AG04449 (cell line): ENCODE measurements at regions of chr6 and their contacts with region 1.

Region 1: DNA sequence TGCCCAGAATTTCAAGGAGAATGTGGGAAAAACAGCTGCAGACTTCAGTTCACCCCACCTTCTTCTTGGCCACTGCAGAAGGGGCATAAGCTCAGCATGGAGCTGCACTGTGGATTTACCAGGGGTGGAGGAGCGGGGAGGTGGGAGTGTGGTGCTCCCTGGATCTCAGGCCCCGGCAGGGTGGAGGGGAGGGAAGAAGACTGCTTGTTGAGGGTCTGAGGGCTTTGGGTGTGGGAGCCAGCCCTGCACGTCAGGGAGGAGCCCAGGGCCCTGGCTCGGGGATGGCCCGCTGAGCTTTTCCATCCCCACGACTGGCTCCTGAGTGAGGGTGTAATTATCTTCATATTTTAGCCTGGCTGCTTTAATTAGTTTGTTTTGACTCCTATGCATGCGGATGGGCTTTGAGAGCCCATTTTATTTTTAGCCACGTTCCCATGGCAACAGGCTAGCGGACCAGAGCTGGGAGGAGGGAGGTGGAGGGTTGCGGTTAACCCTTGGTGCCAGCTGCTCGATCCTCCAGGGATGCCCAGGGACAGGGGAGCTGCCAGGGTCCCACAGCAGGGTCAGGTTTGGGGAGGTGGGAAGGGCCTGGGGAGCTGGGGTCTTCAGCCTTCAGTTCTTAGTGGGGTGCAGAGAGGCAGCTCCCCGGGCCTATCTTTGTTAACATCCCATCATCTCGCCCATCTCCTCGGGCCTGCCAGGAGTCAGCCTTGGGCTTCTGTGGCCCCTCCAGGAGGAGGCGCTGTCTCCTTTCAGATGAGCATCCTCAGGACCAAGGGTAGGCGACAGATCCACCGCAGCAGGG is 68.2 kb downstream of the RAB44 start:
- DNase-seq: no peak
- H3K4me3 ChIP-seq: peak overlapping the region; percentile 20; the same call in 1 of the 2 replicates
- CTCF ChIP-seq: peak; percentile 97

Region 2: GRCh38 chr6:36428911-36429310 is 336.9 kb before region 1 on chr6:
- CTCF ChIA-PET with region 1: no interaction called
- POLR2A ChIA-PET with region 1: no interaction called
- DNase-seq: no peak
- H3K4me3 ChIP-seq: no peak overlapping the region
- CTCF ChIP-seq: no peak

Region 3: GRCh38 chr6:36526066-36526465 is 239.7 kb before region 1 on chr6:
- CTCF ChIA-PET with region 1: no interaction called
- POLR2A ChIA-PET with region 1: no interaction called
- DNase-seq: no peak
- H3K4me3 ChIP-seq: no peak overlapping the region
- CTCF ChIP-seq: no peak

Region 4: GRCh38 chr6:36623547-36624459 is 142.0 kb before region 1 on chr6:
- CTCF ChIA-PET with region 1: interaction called, 167 read pairs
- POLR2A ChIA-PET with region 1: no interaction called
- DNase-seq: no peak
- H3K4me3 ChIP-seq: no peak overlapping the region
- CTCF ChIP-seq: peak; percentile 87

Region 5: GRCh38 chr6:36851149-36851614 is 85.4 kb after region 1 on chr6:
- CTCF ChIA-PET with region 1: interaction called, 169 read pairs
- POLR2A ChIA-PET with region 1: no interaction called
- DNase-seq: peak; percentile 14
- H3K4me3 ChIP-seq: no peak overlapping the region
- CTCF ChIP-seq: peak; percentile 67

Region 6: DNA sequence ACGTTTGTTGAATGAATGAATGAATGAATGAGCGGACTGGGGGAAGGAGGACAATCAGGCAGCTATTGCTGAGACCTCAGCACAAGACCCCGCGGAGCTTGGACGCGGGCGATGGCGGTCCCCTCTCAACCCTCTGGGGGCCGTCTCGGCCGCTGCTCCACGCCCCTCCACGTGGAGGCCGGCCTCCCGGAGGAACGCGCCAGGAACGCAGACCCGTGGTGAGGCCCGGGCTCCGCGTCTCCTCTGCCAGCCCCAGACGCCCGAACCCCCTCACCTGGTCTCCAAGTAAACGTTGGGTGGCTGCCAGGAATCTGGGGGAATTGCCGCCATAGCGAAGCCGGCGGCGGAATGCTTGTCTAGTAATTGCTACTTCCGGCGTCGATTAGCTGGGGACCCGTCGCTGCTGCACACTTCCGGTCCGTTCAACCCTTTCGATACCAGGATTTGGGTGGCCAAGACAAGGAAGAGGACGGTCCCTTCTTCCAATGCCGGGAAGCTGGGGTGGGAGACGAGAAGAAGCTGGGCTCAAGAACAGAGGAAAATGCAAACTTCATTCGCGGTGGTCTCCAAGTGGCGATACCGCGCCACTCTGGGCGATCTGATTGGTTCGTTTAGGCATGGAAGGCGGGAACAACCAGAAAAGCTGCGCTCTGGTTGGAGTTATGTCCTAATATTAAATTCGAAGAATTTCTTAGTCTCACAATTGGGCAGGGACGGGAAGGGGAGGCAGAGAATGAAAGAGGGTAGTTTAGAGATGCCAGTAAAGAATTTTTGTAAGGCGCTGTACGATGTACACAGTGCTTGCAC is 108.8 kb after region 1 on chr6 and contains the start of gene PPIL1:
- CTCF ChIA-PET with region 1: interaction called, 61 read pairs
- POLR2A ChIA-PET with region 1: no interaction called
- DNase-seq: peak; percentile 47
- H3K4me3 ChIP-seq: peak within 1 kb of the TSS; percentile 95
- CTCF ChIP-seq: no peak

Region 7: GRCh38 chr6:36979347-36979742 is 213.5 kb after region 1 on chr6:
- CTCF ChIA-PET with region 1: interaction called, 16 read pairs
- POLR2A ChIA-PET with region 1: no interaction called
- DNase-seq: no peak
- H3K4me3 ChIP-seq: no peak overlapping the region
- CTCF ChIP-seq: peak; percentile 86

Region 8: DNA sequence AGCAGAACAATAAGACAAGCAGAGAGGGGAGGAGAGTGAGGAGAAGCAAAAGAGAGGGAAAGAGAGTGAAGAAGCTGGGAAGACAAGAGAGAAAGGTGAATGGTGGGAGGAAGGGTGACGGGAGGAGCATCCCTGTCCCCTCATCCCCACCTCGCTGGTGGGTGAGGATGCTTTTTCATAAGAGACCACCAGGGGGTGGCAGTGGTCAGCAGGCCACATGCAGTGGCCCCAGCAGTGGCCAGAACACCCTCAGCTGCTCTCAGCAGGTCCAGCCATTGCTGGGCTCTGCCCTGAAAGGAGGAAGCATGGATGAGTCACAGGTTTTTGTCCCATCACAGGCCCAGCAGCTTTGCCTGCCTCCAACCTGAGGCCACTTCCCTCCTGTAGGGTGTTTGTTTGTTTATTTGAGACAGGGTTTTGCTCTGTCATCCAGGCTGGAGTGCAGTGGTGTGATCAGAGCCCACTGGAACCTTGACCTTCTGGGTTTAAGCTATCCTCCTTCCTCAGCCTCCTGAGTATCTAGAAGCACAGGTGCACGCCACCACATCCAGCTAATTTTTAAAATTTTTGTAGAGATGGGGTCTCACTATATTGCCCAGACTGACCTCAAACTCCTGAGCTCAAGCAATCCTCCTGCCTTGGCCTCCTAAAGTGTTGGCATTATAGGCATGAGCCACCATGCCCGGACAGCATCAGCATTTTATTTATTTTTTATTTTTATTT is 263.6 kb after region 1 on chr6:
- CTCF ChIA-PET with region 1: interaction called, 521 read pairs
- POLR2A ChIA-PET with region 1: no interaction called
- DNase-seq: no peak
- H3K4me3 ChIP-seq: no peak overlapping the region
- CTCF ChIP-seq: peak; percentile 79